CD8-positive, alpha-beta T cell (primary cell): ENCODE measurements at regions of chr19 and their contacts with region 1.

Region 1: DNA sequence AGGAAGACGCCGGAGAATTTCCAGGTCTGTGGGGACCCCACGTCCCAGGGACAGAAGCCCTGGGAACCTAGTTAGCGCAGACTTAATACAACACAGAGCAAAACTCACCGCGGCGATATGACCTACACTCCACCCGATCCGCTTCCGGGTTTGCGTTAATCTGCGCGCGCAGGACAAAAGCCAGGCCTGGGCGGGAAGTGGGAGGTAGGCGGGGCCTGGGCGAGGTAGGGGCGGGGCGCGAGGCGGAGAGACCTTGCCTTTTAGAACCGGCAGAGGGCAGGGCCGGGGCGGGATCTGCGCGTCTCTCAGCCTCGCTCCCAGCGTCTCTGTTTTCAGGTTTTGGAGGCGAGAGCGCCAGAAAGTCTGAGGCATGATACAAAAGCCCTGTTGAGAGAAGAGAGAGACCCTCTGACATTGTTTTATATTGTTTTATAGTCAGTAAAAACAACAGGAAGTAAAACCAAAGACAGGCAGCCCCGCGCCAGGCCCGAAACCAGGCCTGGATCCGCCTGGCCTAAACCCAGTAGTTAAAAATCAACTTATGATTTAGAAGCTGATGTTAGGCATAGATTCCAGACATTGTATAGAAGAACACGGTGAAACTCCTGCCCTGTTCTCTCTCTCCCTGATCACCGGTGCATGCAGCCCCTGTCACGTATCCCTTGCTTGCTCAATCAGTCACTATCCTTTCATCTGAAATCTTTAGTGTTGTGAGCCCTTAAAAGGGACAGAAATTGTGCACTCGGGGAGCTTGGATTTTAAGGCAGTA is at the start of gene ZNF611:
- DNase-seq: peak; percentile 98 to 100 (median 100)
- ATAC-seq: peak; percentile 96
- H3K4me3 ChIP-seq: peak within 1 kb of the TSS; percentile 87 to 92
- H3K4me3 Mint-ChIP-seq: peak within 1 kb of the TSS; percentile 92
- H3K27ac ChIP-seq: peak within 1 kb of the TSS; percentile 88 to 90
- H3K27ac Mint-ChIP-seq: peak within 1 kb of the TSS; percentile 95
- H3K4me1 ChIP-seq: peaks cover 11% of the 10 kb centered on the region
- H3K4me1 Mint-ChIP-seq: peaks cover 30% of the 10 kb centered on the region
- H3K27me3 ChIP-seq: no peaks in the 10 kb centered on the region
- H3K27me3 Mint-ChIP-seq: no peaks in the 10 kb centered on the region
- CTCF ChIP-seq: peak; percentile 61
- total RNA-seq, gene ZNF611: 22.4 to 23.0 TPM

Region 2: GRCh38 chr19:52269338-52270261 is 465.5 kb before region 1 on chr19 and contains the start of gene ZNF766:
- CTCF ChIA-PET with region 1: no interaction called
- POLR2A ChIA-PET with region 1: no interaction called
- intact Hi-C with region 1: loop called in 1 of 2 experiments (anchors 1 kb)
- DNase-seq: peak; percentile 95 to 98 (median 97)
- ATAC-seq: peak; percentile 98
- H3K4me3 ChIP-seq: peak within 1 kb of the TSS; percentile 89 to 95
- H3K4me3 Mint-ChIP-seq: peak within 1 kb of the TSS; percentile 98
- H3K27ac ChIP-seq: peak within 1 kb of the TSS; percentile 96
- H3K27ac Mint-ChIP-seq: peak within 1 kb of the TSS; percentile 98
- H3K4me1 ChIP-seq: peaks cover 13% of the 10 kb centered on the region
- H3K4me1 Mint-ChIP-seq: peaks cover 41% of the 10 kb centered on the region
- H3K27me3 ChIP-seq: no peaks in the 10 kb centered on the region
- H3K27me3 Mint-ChIP-seq: no peaks in the 10 kb centered on the region
- CTCF ChIP-seq: no peak
- total RNA-seq, gene ZNF766: 50.8 to 52.6 TPM

Region 3: GRCh38 chr19:52535771-52536447 is 199.2 kb before region 1 on chr19:
- CTCF ChIA-PET with region 1: no interaction called
- POLR2A ChIA-PET with region 1: no interaction called
- intact Hi-C with region 1: loop called in 1 of 2 experiments (anchors 2 kb)
- DNase-seq: peak; percentile 76 to 94 (median 92)
- ATAC-seq: peak; percentile 98
- H3K4me3 ChIP-seq: peak overlapping the region; percentile 65 to 90
- H3K4me3 Mint-ChIP-seq: peak overlapping the region; percentile 96
- H3K27ac ChIP-seq: peak overlapping the region; percentile 62 to 85
- H3K27ac Mint-ChIP-seq: peak overlapping the region; percentile 95
- H3K4me1 ChIP-seq: peaks cover 10% of the 10 kb centered on the region
- H3K4me1 Mint-ChIP-seq: peaks cover 48% of the 10 kb centered on the region
- H3K27me3 ChIP-seq: no peaks in the 10 kb centered on the region
- H3K27me3 Mint-ChIP-seq: no peaks in the 10 kb centered on the region
- CTCF ChIP-seq: peak; percentile 19

Region 4: GRCh38 chr19:52637718-52638585 is 97.1 kb before region 1 on chr19 and contains the start of gene ZNF83:
- CTCF ChIA-PET with region 1: no interaction called
- POLR2A ChIA-PET with region 1: no interaction called
- intact Hi-C with region 1: loop called (anchors 1 to 10 kb)
- DNase-seq: peak; percentile 85 to 96 (median 91)
- ATAC-seq: peak; percentile 95
- H3K4me3 ChIP-seq: peak within 1 kb of the TSS; percentile 68 to 97
- H3K4me3 Mint-ChIP-seq: peak within 1 kb of the TSS; percentile 95
- H3K27ac ChIP-seq: peak within 1 kb of the TSS; percentile 90 to 99
- H3K27ac Mint-ChIP-seq: peak within 1 kb of the TSS; percentile 98
- H3K4me1 ChIP-seq: peaks cover 14% of the 10 kb centered on the region
- H3K4me1 Mint-ChIP-seq: peaks cover 26% of the 10 kb centered on the region
- H3K27me3 ChIP-seq: no peaks in the 10 kb centered on the region
- H3K27me3 Mint-ChIP-seq: no peaks in the 10 kb centered on the region
- CTCF ChIP-seq: no peak
- total RNA-seq, gene ZNF83: 49.4 to 51.2 TPM

Region 5: GRCh38 chr19:52786457-52787359 is 51.6 kb after region 1 on chr19 and contains the start of gene ZNF600:
- CTCF ChIA-PET with region 1: interaction called, 3 read pairs
- POLR2A ChIA-PET with region 1: no interaction called
- intact Hi-C with region 1: loop called in 1 of 2 experiments (anchors 2 kb)
- DNase-seq: peak; percentile 60 to 85 (median 76)
- ATAC-seq: peak; percentile 96
- H3K4me3 ChIP-seq: peak within 1 kb of the TSS; percentile 80 to 84
- H3K4me3 Mint-ChIP-seq: peak within 1 kb of the TSS; percentile 92
- H3K27ac ChIP-seq: peak within 1 kb of the TSS; percentile 54 to 79
- H3K27ac Mint-ChIP-seq: peak within 1 kb of the TSS; percentile 81
- H3K4me1 ChIP-seq: no peaks in the 10 kb centered on the region
- H3K4me1 Mint-ChIP-seq: peaks cover 29% of the 10 kb centered on the region
- H3K27me3 ChIP-seq: no peaks in the 10 kb centered on the region
- H3K27me3 Mint-ChIP-seq: no peaks in the 10 kb centered on the region
- CTCF ChIP-seq: no peak
- total RNA-seq, gene ZNF600: 17.5 to 17.8 TPM

Region 6: DNA sequence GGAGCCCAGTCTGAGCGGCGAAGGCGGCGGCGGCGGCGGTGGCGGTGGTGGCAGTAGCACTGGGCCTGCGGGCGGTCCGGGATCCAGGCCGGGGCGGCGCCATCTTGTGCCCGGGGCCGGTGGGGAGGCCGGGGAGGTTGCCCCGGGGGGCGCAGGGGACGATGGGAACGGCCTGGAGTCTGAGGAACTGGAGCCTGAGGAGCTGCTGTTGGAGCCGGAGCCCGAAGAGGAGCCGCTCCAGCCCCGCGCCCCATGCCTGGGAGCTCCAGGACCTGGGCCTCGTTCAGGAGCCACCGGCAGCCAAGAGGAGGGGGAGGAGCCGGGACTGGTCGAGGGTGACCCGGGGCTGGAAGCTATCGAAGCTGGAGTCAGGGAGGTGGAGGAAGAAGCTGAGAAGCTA is 74.7 kb after region 1 on chr19:
- CTCF ChIA-PET with region 1: no interaction called
- POLR2A ChIA-PET with region 1: no interaction called
- intact Hi-C with region 1: no loop called
- DNase-seq: no peak
- ATAC-seq: no peak
- H3K4me3 ChIP-seq: no peak overlapping the region
- H3K4me3 Mint-ChIP-seq: no peak overlapping the region
- H3K27ac ChIP-seq: no peak overlapping the region
- H3K27ac Mint-ChIP-seq: no peak overlapping the region
- H3K4me1 ChIP-seq: no peaks in the 10 kb centered on the region
- H3K4me1 Mint-ChIP-seq: no peaks in the 10 kb centered on the region
- H3K27me3 ChIP-seq: no peaks in the 10 kb centered on the region
- H3K27me3 Mint-ChIP-seq: no peaks in the 10 kb centered on the region
- CTCF ChIP-seq: no peak

Region 7: GRCh38 chr19:52922841-52923777 is 188.0 kb after region 1 on chr19 and contains the start of gene ZNF888:
- CTCF ChIA-PET with region 1: no interaction called
- POLR2A ChIA-PET with region 1: no interaction called
- intact Hi-C with region 1: loop called in 1 of 2 experiments (anchors 1 kb)
- DNase-seq: peak; percentile 74 to 90 (median 82)
- ATAC-seq: peak; percentile 100
- H3K4me3 ChIP-seq: peak within 1 kb of the TSS; percentile 93 to 97
- H3K4me3 Mint-ChIP-seq: peak within 1 kb of the TSS; percentile 94
- H3K27ac ChIP-seq: peak within 1 kb of the TSS; percentile 62 to 75
- H3K27ac Mint-ChIP-seq: peak within 1 kb of the TSS; percentile 90
- H3K4me1 ChIP-seq: peaks cover 14% of the 10 kb centered on the region
- H3K4me1 Mint-ChIP-seq: peaks cover 33% of the 10 kb centered on the region
- H3K27me3 ChIP-seq: no peaks in the 10 kb centered on the region
- H3K27me3 Mint-ChIP-seq: no peaks in the 10 kb centered on the region
- CTCF ChIP-seq: no peak
- total RNA-seq, gene ZNF888: 4.5 to 4.9 TPM

Region 8: DNA sequence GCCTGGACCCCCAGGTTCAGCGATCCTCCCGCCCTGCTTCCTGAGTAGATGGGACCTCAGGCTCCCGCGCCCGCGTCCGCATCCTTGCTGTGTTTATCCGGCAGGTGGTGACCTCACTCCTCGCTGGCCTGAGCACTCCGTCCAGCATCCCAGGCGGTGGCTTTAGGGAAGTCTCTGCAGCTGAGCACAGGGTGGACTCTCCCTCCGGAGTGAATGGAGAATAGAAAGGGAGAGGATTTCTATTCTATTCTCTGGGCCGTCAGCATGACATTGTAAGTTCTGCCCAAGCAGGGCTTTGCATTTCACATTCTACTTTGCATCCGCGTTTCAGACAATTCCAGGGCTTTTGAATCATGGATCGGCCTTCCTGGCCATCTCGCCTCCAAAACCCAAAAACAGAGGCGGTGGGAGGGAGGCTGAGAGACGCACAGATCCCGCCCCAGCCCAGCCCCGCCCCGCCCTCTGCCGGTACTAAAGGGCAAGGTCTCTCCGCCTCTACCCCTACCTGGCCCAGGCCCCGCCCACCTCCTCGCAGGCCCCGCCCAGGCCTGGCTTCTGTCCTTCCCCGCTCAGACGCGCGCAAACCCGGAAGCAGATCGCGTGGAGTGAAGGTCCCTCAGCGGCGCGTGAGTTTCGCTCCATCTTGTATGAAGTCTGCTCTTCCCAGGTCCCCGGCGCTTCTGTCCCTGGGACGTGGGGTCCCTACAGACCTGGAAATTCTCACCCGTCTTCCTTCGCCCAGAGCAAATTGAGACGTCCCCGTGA is 630.2 kb after region 1 on chr19 and contains the start of gene ZNF525:
- CTCF ChIA-PET with region 1: no interaction called
- POLR2A ChIA-PET with region 1: no interaction called
- intact Hi-C with region 1: loop called in 1 of 2 experiments (anchors 10 kb)
- DNase-seq: peak; percentile 95 to 99 (median 97)
- ATAC-seq: peak; percentile 100
- H3K4me3 ChIP-seq: peak within 1 kb of the TSS; percentile 85 to 99
- H3K4me3 Mint-ChIP-seq: peak within 1 kb of the TSS; percentile 96
- H3K27ac ChIP-seq: peak within 1 kb of the TSS; percentile 86 to 91
- H3K27ac Mint-ChIP-seq: peak within 1 kb of the TSS; percentile 99
- H3K4me1 ChIP-seq: peaks cover 9% of the 10 kb centered on the region
- H3K4me1 Mint-ChIP-seq: peaks cover 29% of the 10 kb centered on the region
- H3K27me3 ChIP-seq: no peaks in the 10 kb centered on the region
- H3K27me3 Mint-ChIP-seq: no peaks in the 10 kb centered on the region
- CTCF ChIP-seq: peak; percentile 54
- total RNA-seq, gene ZNF525: 25.6 to 26.4 TPM